IMR-90 (cell line): ENCODE measurements at regions of chr12 and their contacts with region 1.

Region 1: GRCh38 chr12:106136263-106136662 is 2.5 kb downstream of the NUAK1 start:
- DNase-seq: peak; percentile 83
- ATAC-seq: peak; percentile 4; the same call in 1 of the 2 replicates
- H3K4me3 ChIP-seq: peak overlapping the region; percentile 15
- H3K27ac ChIP-seq: peak overlapping the region; percentile 2; the same call in 1 of the 2 replicates
- H3K4me1 ChIP-seq: peaks cover 29% of the 10 kb centered on the region
- H3K27me3 ChIP-seq: no peaks in the 10 kb centered on the region
- CTCF ChIP-seq: peak; percentile 91
- POLR2A ChIP-seq: 0 out of 2 replicates have a peak, but pooled peaks have one; percentile 22
- RAD21 ChIP-seq: peak; percentile 96

Region 2: DNA sequence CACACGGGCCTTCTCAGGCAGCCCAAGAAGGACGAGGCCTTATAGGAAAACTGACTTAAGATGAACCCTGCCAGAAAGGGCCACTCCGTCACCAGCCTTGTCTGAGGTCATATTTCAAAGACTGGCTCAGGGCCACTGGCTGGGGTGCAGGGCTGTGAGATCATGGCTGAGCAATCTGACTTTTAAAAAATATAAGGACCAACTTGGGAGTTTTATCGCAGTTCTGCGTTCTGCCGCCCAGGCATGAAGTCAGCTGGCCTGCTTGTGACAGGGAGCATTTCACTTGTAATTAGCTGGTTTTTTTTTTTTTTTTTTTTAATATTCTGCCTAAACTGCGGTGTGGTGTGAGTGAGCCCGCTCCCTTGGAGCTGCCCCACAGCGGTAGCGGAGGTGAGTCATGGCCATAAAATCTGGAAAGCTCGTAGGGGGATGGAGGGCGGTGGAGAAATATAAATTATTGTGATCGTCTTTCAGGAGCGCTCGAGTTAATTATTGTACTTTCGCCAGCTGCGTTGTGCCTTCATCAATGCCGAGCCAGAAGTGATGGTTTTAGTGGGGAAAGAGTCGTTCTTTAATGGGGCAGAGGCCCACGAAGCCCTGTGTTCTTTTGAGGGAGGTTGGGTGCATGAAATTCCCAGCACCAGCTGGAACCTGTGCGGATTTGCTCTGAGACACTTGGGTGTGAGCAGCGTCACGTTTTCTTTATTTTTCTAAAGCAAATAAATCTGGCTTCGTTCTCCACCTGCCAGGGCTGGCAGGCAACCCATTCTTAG is 573.9 kb before region 1 on chr12:
- CTCF ChIA-PET with region 1: no interaction called
- POLR2A ChIA-PET with region 1: no interaction called
- dilution Hi-C with region 1: no loop called
- in situ Hi-C with region 1: no loop called
- intact Hi-C with region 1: loop called (anchors 2 kb)
- DNase-seq: peak; percentile 90
- ATAC-seq: peak; percentile 93
- H3K4me3 ChIP-seq: peak overlapping the region; percentile 5; the same call in 1 of the 2 replicates
- H3K27ac ChIP-seq: peak overlapping the region; percentile 70
- H3K4me1 ChIP-seq: peaks cover 9% of the 10 kb centered on the region
- H3K27me3 ChIP-seq: no peaks in the 10 kb centered on the region
- CTCF ChIP-seq: no peak
- POLR2A ChIP-seq: no peak
- RAD21 ChIP-seq: no peak

Region 3: GRCh38 chr12:105705765-105706164 is 430.5 kb before region 1 on chr12:
- CTCF ChIA-PET with region 1: interaction called, 7 read pairs
- POLR2A ChIA-PET with region 1: no interaction called
- dilution Hi-C with region 1: no loop called
- in situ Hi-C with region 1: loop called (anchors 5 kb)
- intact Hi-C with region 1: loop called (anchors 1 kb)
- DNase-seq: peak; percentile 67
- ATAC-seq: peak; percentile 85
- H3K4me3 ChIP-seq: no peak overlapping the region
- H3K27ac ChIP-seq: no peak overlapping the region
- H3K4me1 ChIP-seq: peaks cover 5% of the 10 kb centered on the region; the same call in 1 of the 2 replicates
- H3K27me3 ChIP-seq: peaks cover 6% of the 10 kb centered on the region
- CTCF ChIP-seq: peak; percentile 85
- POLR2A ChIP-seq: no peak
- RAD21 ChIP-seq: peak; percentile 79

Region 4: GRCh38 chr12:105899589-105899988 is 236.7 kb before region 1 on chr12:
- CTCF ChIA-PET with region 1: no interaction called
- POLR2A ChIA-PET with region 1: no interaction called
- dilution Hi-C with region 1: no loop called
- in situ Hi-C with region 1: no loop called
- intact Hi-C with region 1: no loop called
- DNase-seq: no peak
- ATAC-seq: no peak
- H3K4me3 ChIP-seq: no peak overlapping the region
- H3K27ac ChIP-seq: no peak overlapping the region
- H3K4me1 ChIP-seq: no peaks in the 10 kb centered on the region
- H3K27me3 ChIP-seq: no peaks in the 10 kb centered on the region; the same call in 1 of the 2 replicates
- CTCF ChIP-seq: no peak
- POLR2A ChIP-seq: no peak
- RAD21 ChIP-seq: no peak

Region 5: GRCh38 chr12:105934274-105934673 is 202.0 kb before region 1 on chr12:
- CTCF ChIA-PET with region 1: interaction called, 4 read pairs
- POLR2A ChIA-PET with region 1: no interaction called
- dilution Hi-C with region 1: no loop called
- in situ Hi-C with region 1: no loop called
- intact Hi-C with region 1: loop called (anchors 2 kb)
- DNase-seq: peak; percentile 99
- ATAC-seq: peak; percentile 97
- H3K4me3 ChIP-seq: no peak overlapping the region
- H3K27ac ChIP-seq: peak overlapping the region; percentile 39
- H3K4me1 ChIP-seq: peaks cover 19% of the 10 kb centered on the region
- H3K27me3 ChIP-seq: no peaks in the 10 kb centered on the region
- CTCF ChIP-seq: no peak
- POLR2A ChIP-seq: peak; percentile 39; the same call in 1 of the 2 replicates
- RAD21 ChIP-seq: peak; percentile 38

Region 6: GRCh38 chr12:106030210-106031175 is 105.8 kb before region 1 on chr12:
- CTCF ChIA-PET with region 1: interaction called, 3 read pairs
- POLR2A ChIA-PET with region 1: no interaction called
- dilution Hi-C with region 1: no loop called
- in situ Hi-C with region 1: no loop called
- intact Hi-C with region 1: loop called (anchors 1 kb)
- DNase-seq: peak; percentile 96
- ATAC-seq: peak; percentile 86
- H3K4me3 ChIP-seq: peak overlapping the region; percentile 13; the same call in 1 of the 2 replicates
- H3K27ac ChIP-seq: peak overlapping the region; percentile 95
- H3K4me1 ChIP-seq: peaks cover 18% of the 10 kb centered on the region
- H3K27me3 ChIP-seq: no peaks in the 10 kb centered on the region
- CTCF ChIP-seq: no peak
- POLR2A ChIP-seq: peak; percentile 46; the same call in 1 of the 2 replicates
- RAD21 ChIP-seq: peak; percentile 10; the same call in 1 of the 2 replicates

Region 7: DNA sequence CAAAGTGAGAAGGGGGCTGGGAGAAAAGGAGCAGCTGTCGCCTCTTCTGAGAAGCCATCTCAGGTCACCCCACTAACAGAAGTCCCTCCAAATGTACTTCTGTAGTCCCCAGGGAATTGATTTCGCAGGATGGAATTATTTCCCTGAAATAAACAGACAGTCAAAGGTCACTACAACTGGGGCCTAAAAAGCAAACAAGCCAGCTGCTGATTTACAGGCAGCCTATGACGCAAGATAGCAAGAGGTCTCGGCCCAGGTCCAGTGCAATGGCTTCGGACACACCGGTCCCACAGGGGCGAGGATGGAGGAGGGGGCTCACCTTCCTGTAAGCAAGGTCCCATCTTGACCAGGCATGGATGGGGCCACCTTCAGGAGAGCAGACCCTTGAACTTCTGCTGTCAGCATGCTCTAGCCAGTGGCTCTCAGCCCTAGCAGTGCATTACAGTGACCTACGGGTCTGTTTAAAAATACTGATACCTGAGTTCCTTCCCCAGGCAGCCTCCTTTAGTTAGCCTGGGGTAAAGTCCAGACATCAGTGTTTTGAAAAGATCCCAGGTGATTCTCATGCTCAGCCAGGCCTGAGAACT is 15.7 kb before region 1 on chr12:
- CTCF ChIA-PET with region 1: no interaction called
- POLR2A ChIA-PET with region 1: no interaction called
- dilution Hi-C with region 1: no loop called
- in situ Hi-C with region 1: no loop called
- intact Hi-C with region 1: no loop called
- DNase-seq: no peak
- ATAC-seq: no peak
- H3K4me3 ChIP-seq: no peak overlapping the region
- H3K27ac ChIP-seq: no peak overlapping the region
- H3K4me1 ChIP-seq: peaks cover 5% of the 10 kb centered on the region
- H3K27me3 ChIP-seq: no peaks in the 10 kb centered on the region
- CTCF ChIP-seq: no peak
- POLR2A ChIP-seq: no peak
- RAD21 ChIP-seq: no peak

Region 8: GRCh38 chr12:106223485-106224354 is 87.5 kb after region 1 on chr12:
- CTCF ChIA-PET with region 1: interaction called, 9 read pairs
- POLR2A ChIA-PET with region 1: no interaction called
- dilution Hi-C with region 1: no loop called
- in situ Hi-C with region 1: no loop called
- intact Hi-C with region 1: loop called (anchors 1 kb)
- DNase-seq: peak; percentile 54
- ATAC-seq: peak; percentile 96
- H3K4me3 ChIP-seq: no peak overlapping the region
- H3K27ac ChIP-seq: no peak overlapping the region
- H3K4me1 ChIP-seq: no peaks in the 10 kb centered on the region
- H3K27me3 ChIP-seq: peaks cover 11% of the 10 kb centered on the region
- CTCF ChIP-seq: peak; percentile 93
- POLR2A ChIP-seq: 0 out of 2 replicates have a peak, but pooled peaks have one; percentile 28
- RAD21 ChIP-seq: peak; percentile 95